Psoas muscle (tissue), 8 donors: ENCODE measurements at regions of chr12 and their contacts with region 1.

Region 1: DNA sequence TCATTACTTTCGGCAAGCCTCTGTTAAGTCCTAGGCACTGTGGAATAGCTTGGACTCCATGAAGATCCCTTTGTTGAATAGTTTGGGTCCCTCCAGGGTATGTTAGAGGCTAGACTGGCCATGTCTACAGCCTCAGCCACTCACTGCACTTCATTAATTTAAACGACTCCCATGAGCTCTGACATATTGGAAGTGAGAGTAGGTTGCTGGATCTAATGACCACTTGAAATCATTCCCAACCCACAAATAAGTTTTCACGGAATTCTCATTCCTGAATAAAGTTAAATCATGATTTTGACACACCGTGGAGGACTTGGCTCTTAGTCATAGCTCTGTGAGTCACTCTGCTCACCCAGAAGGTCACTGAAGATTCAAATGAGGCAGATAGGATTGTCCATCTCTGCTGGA is 21.4 kb upstream of the APPL2 start:
- DNase-seq: no peak
- ATAC-seq: peak in 2 of 4 donors; percentile 19 to 34
- H3K4me3 ChIP-seq: no peak overlapping the region
- H3K27ac ChIP-seq: no peak overlapping the region
- H3K4me1 ChIP-seq: no peaks in the 10 kb centered on the region
- H3K27me3 ChIP-seq: no peaks in the 10 kb centered on the region
- CTCF ChIP-seq: no peak

Region 2: DNA sequence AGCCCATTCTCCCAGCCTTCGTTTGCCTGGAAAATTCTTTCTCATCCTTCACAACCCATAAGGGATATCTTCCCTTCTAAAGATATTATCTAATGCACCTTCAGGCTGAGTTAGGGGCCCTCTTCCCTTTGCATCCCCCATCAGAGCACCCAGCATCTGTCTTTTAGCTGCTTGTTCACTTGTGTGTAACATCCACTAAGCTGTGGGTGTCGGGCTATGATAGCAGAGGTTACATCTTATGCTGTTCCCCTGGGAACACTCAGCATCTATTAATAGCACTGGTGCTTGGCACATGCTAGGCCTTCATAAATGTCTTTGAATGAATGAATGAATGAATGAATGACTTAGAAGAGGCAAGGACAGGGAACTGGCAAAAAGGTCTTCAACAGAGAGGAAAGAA is 749.6 kb after region 1 on chr12:
- intact Hi-C with region 1: loop called in 1 of 2 experiments (anchors 5 kb)
- DNase-seq: no peak
- ATAC-seq: no peak
- H3K4me3 ChIP-seq: no peak overlapping the region
- H3K27ac ChIP-seq: no peak overlapping the region
- H3K4me1 ChIP-seq: no peaks in the 10 kb centered on the region
- H3K27me3 ChIP-seq: no peaks in the 10 kb centered on the region
- CTCF ChIP-seq: no peak